Mammary epithelial cell (primary cell): ENCODE measurements at regions of chr2 and their contacts with region 1.

Region 1: DNA sequence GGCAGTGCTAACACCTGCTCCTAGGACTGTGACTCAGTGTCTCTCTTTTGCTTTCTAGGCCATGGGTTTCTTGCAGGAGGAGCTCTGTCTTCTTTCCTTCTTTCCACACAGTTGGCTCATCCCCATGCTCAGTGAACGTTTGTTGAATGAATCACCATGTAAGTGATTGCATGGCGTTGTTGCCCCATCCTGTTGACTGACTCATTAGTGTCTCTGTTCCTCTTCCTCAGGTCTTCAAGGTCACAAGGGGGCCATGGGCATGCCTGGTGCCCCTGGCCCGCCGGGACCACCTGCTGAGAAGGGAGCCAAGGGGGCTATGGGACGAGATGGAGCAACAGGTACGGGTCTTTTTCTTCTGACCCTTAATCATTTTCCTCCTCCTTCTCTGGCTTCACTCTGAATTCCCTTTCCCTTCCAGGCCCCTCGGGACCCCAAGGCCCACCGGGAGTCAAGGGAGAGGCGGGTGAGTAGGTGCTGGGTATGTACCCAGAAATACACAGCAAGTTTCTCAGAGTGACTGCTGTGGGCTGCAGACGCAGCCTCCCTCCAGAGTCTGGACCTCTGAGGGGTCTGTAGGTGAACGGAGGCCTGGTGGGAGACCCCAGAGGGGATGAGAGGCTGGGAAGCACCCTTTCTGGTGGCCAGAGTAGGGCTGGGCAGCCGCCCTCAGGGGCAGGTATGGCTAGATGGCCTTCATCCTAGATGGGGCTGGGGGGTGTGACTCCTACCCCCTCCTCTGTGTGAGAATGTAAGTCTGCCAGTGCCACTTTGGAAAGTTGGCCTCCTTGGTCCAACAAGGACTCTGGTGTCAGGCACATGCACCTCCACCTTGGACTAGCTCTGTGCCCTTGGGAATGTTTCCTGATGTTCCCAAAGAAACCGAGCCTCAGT is 32.4 kb downstream of the MARCO start:
- DNase-seq: peak; percentile 90
- H3K4me3 ChIP-seq: no peak overlapping the region
- H3K27ac ChIP-seq: peak overlapping the region; percentile 67
- H3K4me1 ChIP-seq: peaks cover 41% of the 10 kb centered on the region
- H3K27me3 ChIP-seq: no peaks in the 10 kb centered on the region
- CTCF ChIP-seq: no peak

Region 2: DNA sequence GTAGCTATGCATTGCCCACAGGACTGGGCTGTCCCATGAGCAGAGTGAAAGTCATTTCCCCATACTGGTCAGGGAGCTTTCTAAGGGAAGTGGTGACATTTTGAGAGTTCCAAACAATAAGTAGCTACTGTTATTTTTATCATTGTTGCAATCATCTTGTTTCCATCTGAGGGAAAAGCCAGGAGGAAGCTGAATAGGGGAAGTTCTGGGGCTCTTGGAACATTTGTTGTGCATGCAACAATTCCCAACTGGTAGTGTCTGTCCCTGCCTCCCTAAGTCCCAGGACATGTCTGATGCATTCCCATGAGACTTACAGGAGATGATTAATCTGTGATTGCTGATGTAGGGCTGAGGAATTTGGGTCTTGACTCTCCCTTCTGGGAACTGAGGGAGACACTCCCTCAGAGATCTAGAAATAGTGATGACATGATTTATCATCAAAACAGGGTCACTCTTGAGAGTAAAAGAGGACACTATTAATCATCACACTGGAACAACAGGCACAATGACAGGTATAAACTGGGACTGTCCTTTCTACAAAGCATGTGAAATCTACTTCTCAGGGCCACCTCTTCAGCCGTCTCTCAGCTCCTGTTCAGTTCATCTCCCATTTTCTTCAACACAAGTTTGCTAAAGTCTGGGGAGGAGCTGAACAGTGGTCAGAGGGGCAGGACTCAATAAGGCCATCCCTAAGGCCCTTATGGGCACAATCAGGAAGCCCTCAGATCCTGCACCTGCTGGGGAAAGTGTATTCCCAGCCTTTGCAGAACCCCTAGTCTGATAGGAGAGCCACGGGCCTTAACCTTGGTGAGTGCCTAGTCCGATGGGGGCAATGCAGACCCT is 60.3 kb before region 1 on chr2:
- CTCF ChIA-PET with region 1: interaction called, 4 read pairs
- dilution Hi-C with region 1: no loop called
- in situ Hi-C with region 1: no loop called
- intact Hi-C with region 1: loop called (anchors 1 kb)
- DNase-seq: peak; percentile 83
- H3K4me3 ChIP-seq: no peak overlapping the region
- H3K27ac ChIP-seq: peak overlapping the region; percentile 56
- H3K4me1 ChIP-seq: peaks cover 14% of the 10 kb centered on the region
- H3K27me3 ChIP-seq: no peaks in the 10 kb centered on the region
- CTCF ChIP-seq: no peak

Region 3: GRCh38 chr2:119005051-119005450 is 30.7 kb after region 1 on chr2:
- CTCF ChIA-PET with region 1: no interaction called
- dilution Hi-C with region 1: no loop called
- in situ Hi-C with region 1: no loop called
- intact Hi-C with region 1: loop called (anchors 2 kb)
- DNase-seq: peak; percentile 87
- H3K4me3 ChIP-seq: no peak overlapping the region
- H3K27ac ChIP-seq: no peak overlapping the region
- H3K4me1 ChIP-seq: peaks cover 14% of the 10 kb centered on the region
- H3K27me3 ChIP-seq: peaks cover 14% of the 10 kb centered on the region
- CTCF ChIP-seq: no peak